Activated naive CD4-positive, alpha-beta T cell treated with anti-CD3 and anti-CD28 coated beads for 36 hours (primary cell): ENCODE measurements at regions of chr13 and their contacts with region 1.

Region 1: DNA sequence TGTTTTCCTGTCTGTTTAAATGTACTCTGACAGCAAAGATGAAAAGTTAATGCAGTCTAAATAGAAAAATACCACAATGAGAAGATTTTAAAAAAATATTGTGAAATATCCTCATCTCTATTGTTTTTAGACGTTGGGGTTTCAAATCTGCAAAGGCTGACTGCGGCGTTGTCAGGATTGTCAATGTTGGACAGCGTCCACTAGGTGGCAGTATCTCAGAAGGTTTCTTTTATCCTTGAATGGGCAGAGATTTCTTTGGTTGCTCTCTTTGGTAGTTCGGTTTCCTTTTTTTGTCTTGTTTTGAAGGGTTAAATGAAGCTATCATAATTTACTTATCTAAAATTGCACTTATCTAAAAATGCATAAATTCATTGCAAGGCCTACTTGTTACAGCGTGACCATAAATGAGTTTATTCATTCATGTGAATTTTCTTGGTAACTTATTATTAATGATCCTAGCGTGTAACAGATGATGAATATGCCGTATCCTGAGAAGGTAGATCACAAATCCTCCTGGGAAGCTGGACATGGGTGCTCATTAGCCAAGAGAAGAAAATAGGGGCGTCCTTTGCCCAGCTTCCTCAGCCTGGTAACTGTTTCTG is 21.1 kb downstream of the TNFSF11 start:
- DNase-seq: peak; percentile 73
- H3K4me3 Mint-ChIP-seq: no peak overlapping the region
- H3K27ac Mint-ChIP-seq: no peak overlapping the region
- H3K4me1 Mint-ChIP-seq: no peaks in the 10 kb centered on the region
- H3K27me3 Mint-ChIP-seq: no peaks in the 10 kb centered on the region

Region 2: DNA sequence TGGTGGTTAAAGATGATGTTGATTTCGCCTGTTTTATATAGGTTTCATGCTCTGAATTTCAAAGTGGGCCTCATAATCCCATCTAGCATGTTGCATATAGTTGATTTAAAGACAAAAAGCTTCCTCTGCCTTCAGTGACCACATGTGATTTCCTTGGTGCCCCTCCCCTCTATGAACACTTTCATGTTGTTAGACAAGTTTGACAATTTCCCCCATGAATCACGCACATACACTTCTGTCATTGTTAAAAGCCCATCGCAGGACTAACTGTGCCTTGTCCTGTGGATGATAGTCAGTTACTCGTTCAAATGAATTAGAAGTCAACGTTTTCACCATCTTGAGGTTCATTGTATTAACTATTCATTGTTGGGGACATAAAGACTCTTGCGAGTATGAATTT is 14.4 kb before region 1 on chr13:
- CTCF ChIA-PET with region 1: interaction called, 11 read pairs
- intact Hi-C with region 1: no loop called
- DNase-seq: no peak
- H3K4me3 Mint-ChIP-seq: no peak overlapping the region
- H3K27ac Mint-ChIP-seq: no peak overlapping the region
- H3K4me1 Mint-ChIP-seq: peaks cover 11% of the 10 kb centered on the region
- H3K27me3 Mint-ChIP-seq: peaks cover 13% of the 10 kb centered on the region

Region 3: DNA sequence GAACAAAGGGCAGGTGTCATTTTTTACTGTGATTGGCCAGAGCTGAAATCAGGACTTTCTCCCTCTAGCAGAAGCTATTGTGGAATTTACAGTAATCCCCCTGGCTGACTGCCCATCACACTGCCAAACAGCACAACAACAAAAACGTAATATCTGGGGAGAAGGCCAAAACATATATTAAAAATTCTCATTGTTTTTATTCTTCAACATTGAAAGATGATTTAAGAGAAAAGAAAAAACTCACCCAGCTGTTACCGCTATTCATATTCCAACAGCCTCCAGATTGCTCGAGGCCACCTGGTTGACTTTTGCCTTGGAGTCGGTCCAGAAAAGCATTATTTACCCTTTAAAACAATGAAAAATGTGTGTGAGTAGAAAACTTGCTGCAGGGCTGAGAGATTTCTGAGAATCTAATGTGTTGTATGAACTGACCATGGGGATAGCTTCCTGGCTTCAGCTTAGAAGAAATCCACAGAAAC is 299.7 kb after region 1 on chr13:
- CTCF ChIA-PET with region 1: no interaction called
- intact Hi-C with region 1: no loop called
- DNase-seq: no peak
- H3K4me3 Mint-ChIP-seq: no peak overlapping the region
- H3K27ac Mint-ChIP-seq: no peak overlapping the region
- H3K4me1 Mint-ChIP-seq: no peaks in the 10 kb centered on the region
- H3K27me3 Mint-ChIP-seq: no peaks in the 10 kb centered on the region

Region 4: GRCh38 chr13:43132257-43132656 is 537.2 kb after region 1 on chr13:
- CTCF ChIA-PET with region 1: no interaction called
- intact Hi-C with region 1: loop called (anchors 5 kb)
- DNase-seq: peak; percentile 29
- H3K4me3 Mint-ChIP-seq: no peak overlapping the region
- H3K27ac Mint-ChIP-seq: no peak overlapping the region
- H3K4me1 Mint-ChIP-seq: peaks cover 12% of the 10 kb centered on the region
- H3K27me3 Mint-ChIP-seq: no peaks in the 10 kb centered on the region